Psoas muscle (tissue), 8 donors: ENCODE measurements at regions of chr21 and their contacts with region 1.

Region 1: GRCh38 chr21:33542640-33543504 is at the start of gene SON:
- DNase-seq: peak; percentile 99 to 100
- ATAC-seq: peak; percentile 94 to 97 (median 96)
- H3K4me3 ChIP-seq: peak within 1 kb of the TSS; percentile 84
- H3K27ac ChIP-seq: peak within 1 kb of the TSS; percentile 99
- H3K4me1 ChIP-seq: peaks cover 31% of the 10 kb centered on the region
- H3K27me3 ChIP-seq: no peaks in the 10 kb centered on the region
- CTCF ChIP-seq: no peak
- total RNA-seq, gene SON: 126 to 179 (median 142) TPM

Region 2: DNA sequence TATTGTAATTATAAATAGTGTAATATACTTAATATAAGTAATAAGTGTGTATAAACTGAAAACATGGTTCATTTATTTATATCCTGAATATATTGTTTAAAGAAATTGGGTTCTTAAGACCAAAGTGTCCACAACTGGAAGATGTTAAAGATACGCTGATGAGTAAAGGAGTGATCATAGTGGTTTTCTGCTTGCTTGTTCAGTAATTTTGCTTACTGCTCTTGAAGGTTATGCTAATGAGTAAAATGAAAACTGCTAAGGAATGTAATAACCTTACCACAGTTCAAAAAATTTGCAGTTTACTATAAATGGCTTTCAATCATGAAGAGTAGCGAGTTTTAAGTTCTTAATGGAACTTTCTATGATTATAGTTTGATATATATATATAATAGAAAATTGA is 23.6 kb after region 1 on chr21:
- intact Hi-C with region 1: loop called in 1 of 2 experiments (anchors 1 kb)
- DNase-seq: no peak
- ATAC-seq: no peak
- H3K4me3 ChIP-seq: no peak overlapping the region
- H3K27ac ChIP-seq: no peak overlapping the region
- H3K4me1 ChIP-seq: peaks cover 12% of the 10 kb centered on the region
- H3K27me3 ChIP-seq: no peaks in the 10 kb centered on the region
- CTCF ChIP-seq: no peak

Region 3: DNA sequence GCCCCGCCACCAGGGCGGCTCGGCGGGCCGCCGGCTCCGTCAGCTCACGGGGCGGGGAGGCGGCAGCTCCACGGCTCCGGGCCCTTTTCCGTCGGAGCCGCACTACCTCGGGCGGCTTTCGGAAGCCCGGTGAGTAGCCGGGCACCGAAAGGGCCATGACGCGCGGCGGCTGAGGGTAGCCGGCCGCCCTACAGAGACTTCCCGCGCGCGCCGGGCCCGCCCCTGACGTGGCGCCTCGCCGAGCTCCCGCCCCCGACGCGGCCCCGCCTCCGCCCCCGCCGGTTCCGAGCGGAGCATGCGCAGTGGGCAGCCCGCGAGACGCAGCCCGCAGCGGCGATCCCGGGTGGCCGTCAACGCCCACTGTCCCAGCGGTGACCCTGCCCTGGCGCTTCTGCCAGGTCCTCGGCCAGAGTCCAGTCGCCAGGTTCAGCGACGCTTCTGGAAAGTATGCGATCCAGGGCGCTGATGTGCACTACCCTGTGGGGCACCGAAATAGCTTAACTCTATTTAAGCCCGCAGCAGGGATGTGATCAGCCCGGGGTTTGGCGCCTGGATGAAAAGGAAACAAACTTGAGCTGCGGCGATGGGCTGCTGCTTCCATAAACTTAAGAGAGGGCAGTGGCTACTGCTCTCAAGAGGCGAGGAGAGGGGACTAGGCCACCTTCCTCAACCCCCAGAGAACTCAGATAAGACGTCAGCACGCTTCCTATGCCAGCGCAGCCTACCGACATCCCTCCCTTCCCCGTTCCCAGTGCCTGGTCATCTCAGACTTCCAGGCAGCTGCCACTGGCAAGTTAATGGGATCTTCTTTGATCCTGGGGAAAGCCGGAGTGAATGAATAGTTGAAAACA is 45.8 kb after region 1 on chr21 and contains the start of gene DONSON:
- intact Hi-C with region 1: loop called in 1 of 2 experiments (anchors 5 kb)
- DNase-seq: peak; percentile 91 to 96
- ATAC-seq: peak; percentile 95 to 97 (median 96)
- H3K4me3 ChIP-seq: peak within 1 kb of the TSS; percentile 88
- H3K27ac ChIP-seq: peak within 1 kb of the TSS; percentile 84
- H3K4me1 ChIP-seq: peaks cover 14% of the 10 kb centered on the region
- H3K27me3 ChIP-seq: no peaks in the 10 kb centered on the region
- CTCF ChIP-seq: no peak
- total RNA-seq, gene DONSON: 4.8 to 5.4 (median 5.2) TPM

Region 4: GRCh38 chr21:33608559-33608958 is 65.7 kb after region 1 on chr21:
- intact Hi-C with region 1: loop called in 1 of 2 experiments (anchors 5 kb)
- DNase-seq: no peak
- ATAC-seq: no peak
- H3K4me3 ChIP-seq: no peak overlapping the region
- H3K27ac ChIP-seq: no peak overlapping the region
- H3K4me1 ChIP-seq: peaks cover 8% of the 10 kb centered on the region
- H3K27me3 ChIP-seq: no peaks in the 10 kb centered on the region
- CTCF ChIP-seq: no peak